ENCODE measurements at regions of chr7 and their contacts with region 1.

Region 1: DNA sequence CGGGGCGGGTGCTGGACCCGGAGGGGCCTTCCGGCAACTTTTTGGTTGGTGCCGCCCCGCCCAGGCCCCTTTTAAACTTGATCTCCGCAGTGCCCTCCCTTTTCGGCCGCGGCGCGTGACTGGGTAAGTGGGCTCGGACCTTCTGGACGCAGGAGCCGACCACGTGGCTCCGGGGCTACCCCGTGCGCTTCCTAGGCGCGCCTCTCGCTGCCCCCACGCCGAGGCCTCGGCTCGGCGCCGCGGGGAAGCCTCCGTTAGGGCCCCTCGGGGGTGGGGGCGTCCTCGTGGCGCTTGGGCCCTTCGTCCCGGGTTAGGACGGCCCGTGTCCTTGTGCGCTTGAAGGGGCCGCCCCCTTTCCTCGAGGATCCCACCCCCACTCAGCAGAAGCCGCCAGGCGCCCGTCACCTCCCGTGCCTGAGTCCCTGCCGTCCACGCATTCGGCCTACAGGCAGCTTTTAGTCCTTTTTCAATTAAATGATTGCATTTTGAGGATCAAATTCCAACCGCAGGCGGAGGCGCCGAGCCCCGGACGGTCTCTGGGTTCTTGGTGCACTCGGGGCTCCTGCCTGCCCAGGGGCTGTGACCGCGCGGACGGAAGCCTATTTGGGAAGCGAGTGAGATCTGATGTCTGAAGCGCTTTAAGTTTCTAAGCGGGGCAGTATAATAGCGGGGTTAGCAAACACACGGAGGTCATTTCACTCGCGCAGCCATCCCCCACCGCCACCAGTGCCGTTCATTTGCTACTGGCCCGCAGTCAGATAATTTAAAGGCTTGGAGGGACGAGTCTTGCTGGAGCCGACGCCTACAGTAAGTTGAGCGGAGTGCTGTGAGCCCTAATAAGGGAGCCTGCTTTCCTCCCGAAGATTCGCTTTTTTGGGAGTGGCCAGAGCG is 31.8 kb upstream of the TOMM7 start:
- DNase-seq: peak; percentile 75 to 89
- ATAC-seq: peak; percentile 87 to 93 (median 88)
- H3K4me3 ChIP-seq: peak overlapping the region; percentile 62
- H3K4me3 Mint-ChIP-seq: peak overlapping the region; percentile 96
- H3K27ac ChIP-seq: peak overlapping the region; percentile 76
- H3K27ac Mint-ChIP-seq: peak overlapping the region; percentile 82 to 93
- H3K4me1 ChIP-seq: peaks cover 20% of the 10 kb centered on the region
- H3K4me1 Mint-ChIP-seq: peaks cover 16 to 20% of the 10 kb centered on the region in 2 donors
- H3K27me3 ChIP-seq: no peaks in the 10 kb centered on the region
- H3K27me3 Mint-ChIP-seq: no peaks in the 10 kb centered on the region
- CTCF ChIP-seq: peak; percentile 91

Region 2: GRCh38 chr7:22420973-22421635 is 433.3 kb before region 1 on chr7:
- intact Hi-C with region 1: no loop called
- DNase-seq: no peak
- ATAC-seq: no peak
- H3K4me3 ChIP-seq: no peak overlapping the region
- H3K4me3 Mint-ChIP-seq: no peak overlapping the region
- H3K27ac ChIP-seq: no peak overlapping the region
- H3K27ac Mint-ChIP-seq: no peak overlapping the region
- H3K4me1 ChIP-seq: no peaks in the 10 kb centered on the region
- H3K4me1 Mint-ChIP-seq: no peaks in the 10 kb centered on the region
- H3K27me3 ChIP-seq: no peaks in the 10 kb centered on the region
- H3K27me3 Mint-ChIP-seq: peaks cover 8% of the 10 kb centered on the region in 2 donors
- CTCF ChIP-seq: no peak

Region 3: GRCh38 chr7:22822486-22823141 is 31.8 kb before region 1 on chr7 and contains the start of gene TOMM7:
- intact Hi-C with region 1: loop called (anchors 1 kb)
- DNase-seq: peak; percentile 80 to 98
- ATAC-seq: peak; percentile 97 to 99 (median 99)
- H3K4me3 ChIP-seq: peak within 1 kb of the TSS; percentile 89
- H3K4me3 Mint-ChIP-seq: peak within 1 kb of the TSS; percentile 99
- H3K27ac ChIP-seq: peak within 1 kb of the TSS; percentile 81
- H3K27ac Mint-ChIP-seq: peak within 1 kb of the TSS; percentile 97 to 98
- H3K4me1 ChIP-seq: peaks cover 13% of the 10 kb centered on the region
- H3K4me1 Mint-ChIP-seq: peaks cover 34 to 40% of the 10 kb centered on the region in 2 donors
- H3K27me3 ChIP-seq: peaks cover 2% of the 10 kb centered on the region
- H3K27me3 Mint-ChIP-seq: peaks cover 7 to 22% of the 10 kb centered on the region in 2 donors
- CTCF ChIP-seq: no peak
- total RNA-seq, gene TOMM7: 194 to 286 (median 269) TPM